ENCODE measurements at regions of chr14 and their contacts with region 1.

Region 1: DNA sequence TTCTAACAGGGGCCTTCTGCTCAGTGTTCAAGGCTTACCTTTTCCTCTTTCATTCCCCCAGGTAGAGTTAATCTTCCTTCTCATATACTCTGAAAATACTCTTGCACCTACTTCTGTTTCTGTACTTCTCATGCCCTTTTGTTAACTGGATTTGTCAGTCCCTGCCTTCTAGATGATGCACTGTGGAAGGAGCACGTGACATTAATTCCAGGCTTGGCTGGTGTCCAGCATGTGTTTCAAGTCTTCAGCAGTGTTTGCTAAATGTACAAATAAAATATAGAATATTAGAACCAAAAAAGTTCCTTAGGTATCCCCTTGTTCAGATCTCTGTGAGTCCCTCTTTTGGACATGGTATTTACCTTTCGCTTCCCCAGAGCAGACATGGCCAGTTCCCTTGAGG is 27.9 kb upstream of the EVL start:
- DNase-seq: no peak
- ATAC-seq: no peak
- H3K4me3 ChIP-seq: no peak overlapping the region
- H3K27ac ChIP-seq: no peak overlapping the region
- H3K4me1 ChIP-seq: no peaks in the 10 kb centered on the region
- H3K27me3 ChIP-seq: no peaks in the 10 kb centered on the region
- CTCF ChIP-seq: no peak
- EP300 ChIP-seq: no peak
- POLR2A ChIP-seq: no peak
- RAD21 ChIP-seq: no peak

Region 2: DNA sequence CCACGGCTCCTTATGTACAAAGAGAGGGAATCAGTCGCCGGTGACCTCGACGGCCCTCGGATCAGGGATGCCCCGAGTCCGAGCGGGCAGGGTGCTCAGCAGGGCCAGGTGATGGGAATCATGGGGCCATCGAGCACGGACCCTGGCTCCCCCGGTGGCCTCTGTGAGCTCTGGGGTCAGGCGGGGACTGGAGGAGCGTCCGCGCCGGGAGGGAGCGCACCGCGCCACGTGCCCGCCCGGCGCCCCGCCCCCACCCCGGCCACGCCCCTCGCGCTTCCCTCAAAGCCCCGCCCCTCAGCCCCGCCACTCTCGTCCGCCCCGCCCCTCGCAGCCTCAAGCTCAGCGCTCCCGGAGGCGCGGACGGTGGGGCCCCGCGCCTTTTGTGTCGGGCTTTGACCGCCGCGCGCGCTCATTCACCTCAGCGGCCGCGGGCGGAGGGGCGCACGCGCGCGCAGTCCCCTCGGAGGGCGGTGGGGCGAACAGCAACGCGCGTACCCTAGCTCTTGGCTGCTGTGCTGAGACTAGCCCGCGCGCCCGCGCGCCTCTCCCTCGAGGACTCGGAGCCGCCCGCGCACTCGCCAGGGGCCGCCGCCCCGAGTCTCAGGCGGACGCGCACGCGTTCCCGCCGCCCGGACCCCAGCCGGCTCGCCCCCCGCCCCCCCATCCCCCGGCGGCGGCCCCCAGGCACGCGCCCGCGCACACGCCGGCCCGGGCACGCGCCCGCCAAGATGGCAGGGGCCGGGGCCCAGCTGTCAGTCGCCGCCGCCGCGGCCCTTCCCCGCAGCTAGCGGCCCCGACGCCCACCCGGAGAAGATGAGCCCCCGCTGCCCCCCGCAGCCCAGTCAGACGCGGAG is 66.0 kb before region 1 on chr14:
- CTCF ChIA-PET with region 1: no interaction called
- POLR2A ChIA-PET with region 1: no interaction called
- RAD21 ChIA-PET with region 1: no interaction called
- SMC1A ChIA-PET with region 1: no interaction called
- in situ Hi-C with region 1: no loop called
- intact Hi-C with region 1: no loop called
- DNase-seq: no peak
- ATAC-seq: peak; percentile 86
- H3K4me3 ChIP-seq: peak overlapping the region; percentile 63; the same call in 1 of the 2 replicates
- H3K27ac ChIP-seq: no peak overlapping the region
- H3K4me1 ChIP-seq: no peaks in the 10 kb centered on the region
- H3K27me3 ChIP-seq: peaks cover 0 to 5% of the 10 kb centered on the region in 2 experiments; a peak in 2 of 4 replicates
- CTCF ChIP-seq: no peak
- EP300 ChIP-seq: no peak
- POLR2A ChIP-seq: peak; percentile 48; the same call in 1 of the 2 replicates
- RAD21 ChIP-seq: no peak

Region 3: GRCh38 chr14:100025111-100025510 is 12.2 kb before region 1 on chr14:
- CTCF ChIA-PET with region 1: interaction called, 21 read pairs
- POLR2A ChIA-PET with region 1: interaction called, 6 read pairs
- RAD21 ChIA-PET with region 1: interaction called, 4 read pairs
- SMC1A ChIA-PET with region 1: interaction called, 24 read pairs
- in situ Hi-C with region 1: no loop called
- intact Hi-C with region 1: no loop called
- DNase-seq: no peak
- ATAC-seq: peak; percentile 96
- H3K4me3 ChIP-seq: no peak overlapping the region
- H3K27ac ChIP-seq: no peak overlapping the region
- H3K4me1 ChIP-seq: peaks cover 5% of the 10 kb centered on the region; the same call in 1 of the 2 replicates
- H3K27me3 ChIP-seq: no peaks in the 10 kb centered on the region
- CTCF ChIP-seq: peak; percentile 44 to 66 (median 55); a peak in 5 of 6 replicates
- EP300 ChIP-seq: no peak
- POLR2A ChIP-seq: no peak
- RAD21 ChIP-seq: peak; percentile 45; the same call in 1 of the 2 replicates

Region 4: DNA sequence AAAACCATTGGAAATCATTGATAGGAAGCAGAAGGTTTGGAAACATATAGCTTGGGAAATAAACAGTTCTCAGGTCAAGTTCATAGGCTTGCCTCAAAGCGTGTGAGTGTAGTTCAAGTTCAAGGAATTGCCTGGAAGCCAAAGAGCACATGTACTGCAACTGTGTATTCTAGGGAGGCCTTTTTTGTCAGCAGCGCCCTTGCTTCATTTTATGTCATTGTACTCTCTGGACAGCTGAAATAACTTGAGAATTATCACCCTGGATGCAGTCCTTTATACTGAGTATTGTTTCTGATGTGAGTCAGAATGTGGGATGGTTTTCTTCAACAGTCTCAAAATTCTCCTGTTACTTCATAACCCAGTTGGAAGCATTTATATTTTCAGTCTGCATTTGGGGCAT is 11.9 kb after region 1 on chr14:
- CTCF ChIA-PET with region 1: interaction called, 40 read pairs
- POLR2A ChIA-PET with region 1: no interaction called
- RAD21 ChIA-PET with region 1: no interaction called
- SMC1A ChIA-PET with region 1: interaction called, 5 read pairs
- in situ Hi-C with region 1: no loop called
- intact Hi-C with region 1: no loop called
- DNase-seq: no peak
- ATAC-seq: no peak
- H3K4me3 ChIP-seq: no peak overlapping the region
- H3K27ac ChIP-seq: no peak overlapping the region
- H3K4me1 ChIP-seq: no peaks in the 10 kb centered on the region
- H3K27me3 ChIP-seq: no peaks in the 10 kb centered on the region
- CTCF ChIP-seq: no peak
- EP300 ChIP-seq: no peak
- POLR2A ChIP-seq: no peak
- RAD21 ChIP-seq: no peak